ENCODE measurements at regions of chr20 and their contacts with region 1.

Region 1: GRCh38 chr20:46022411-46023147 is 6.4 kb upstream of the SLC12A5 start:
- DNase-seq: peak; percentile 23
- H3K4me3 ChIP-seq: peak overlapping the region; percentile 8 to 59 (median 29)
- H3K27ac ChIP-seq: no peak overlapping the region
- H3K4me1 ChIP-seq: peaks cover 8% of the 10 kb centered on the region
- H3K27me3 ChIP-seq: no peaks in the 10 kb centered on the region
- CTCF ChIP-seq: peak; percentile 57 to 78

Region 2: DNA sequence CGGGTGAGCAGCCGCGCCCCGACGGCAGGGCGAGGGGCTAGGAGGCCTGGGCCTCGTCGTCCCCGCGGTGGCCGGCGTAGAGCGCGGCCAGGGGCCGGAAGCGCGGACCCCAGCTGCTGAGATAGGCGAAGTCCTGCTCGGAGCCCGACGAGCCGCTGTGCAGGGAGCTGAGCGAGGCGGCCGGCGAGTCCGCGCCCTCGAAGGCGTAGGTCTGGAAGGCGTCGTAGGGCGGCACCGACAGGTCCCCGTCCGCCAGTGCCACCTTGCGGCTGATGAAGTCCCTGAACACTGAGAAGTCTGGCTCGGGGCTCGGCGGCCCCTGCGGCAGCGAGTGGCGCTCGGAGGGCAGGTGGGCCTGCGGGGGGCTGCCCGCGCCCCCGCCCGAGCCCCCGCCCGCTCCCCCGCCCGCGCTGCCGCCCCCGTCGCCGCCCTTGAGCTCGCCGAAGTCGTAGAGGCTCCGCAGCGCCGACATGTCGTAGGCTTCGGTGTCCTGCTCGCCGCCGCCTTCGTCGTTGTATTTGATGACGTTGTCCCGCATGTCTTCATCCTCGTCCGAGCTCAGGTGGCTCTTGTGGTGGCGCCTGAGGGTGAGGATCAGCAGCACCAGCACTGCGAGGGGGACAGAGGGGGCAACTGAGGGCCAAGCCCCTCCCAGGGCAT is 152.0 kb after region 1 on chr20:
- CTCF ChIA-PET with region 1: no interaction called
- dilution Hi-C with region 1: no loop called
- in situ Hi-C with region 1: no loop called
- intact Hi-C with region 1: loop called (anchors 2 kb)
- DNase-seq: peak; percentile 30
- H3K4me3 ChIP-seq: no peak overlapping the region
- H3K27ac ChIP-seq: no peak overlapping the region
- H3K4me1 ChIP-seq: no peaks in the 10 kb centered on the region
- H3K27me3 ChIP-seq: peaks cover 19% of the 10 kb centered on the region
- CTCF ChIP-seq: peak; percentile 44 to 76

Region 3: GRCh38 chr20:46330072-46330763 is 307.6 kb after region 1 on chr20:
- CTCF ChIA-PET with region 1: no interaction called
- dilution Hi-C with region 1: no loop called
- in situ Hi-C with region 1: no loop called
- intact Hi-C with region 1: loop called (anchors 10 kb)
- DNase-seq: no peak
- H3K4me3 ChIP-seq: no peak overlapping the region
- H3K27ac ChIP-seq: no peak overlapping the region
- H3K4me1 ChIP-seq: peaks cover 18% of the 10 kb centered on the region
- H3K27me3 ChIP-seq: no peaks in the 10 kb centered on the region
- CTCF ChIP-seq: no peak

Measured in mammary epithelial cell (primary cell).